ENCODE measurements at regions of chr4 and their contacts with region 1.

Region 1: DNA sequence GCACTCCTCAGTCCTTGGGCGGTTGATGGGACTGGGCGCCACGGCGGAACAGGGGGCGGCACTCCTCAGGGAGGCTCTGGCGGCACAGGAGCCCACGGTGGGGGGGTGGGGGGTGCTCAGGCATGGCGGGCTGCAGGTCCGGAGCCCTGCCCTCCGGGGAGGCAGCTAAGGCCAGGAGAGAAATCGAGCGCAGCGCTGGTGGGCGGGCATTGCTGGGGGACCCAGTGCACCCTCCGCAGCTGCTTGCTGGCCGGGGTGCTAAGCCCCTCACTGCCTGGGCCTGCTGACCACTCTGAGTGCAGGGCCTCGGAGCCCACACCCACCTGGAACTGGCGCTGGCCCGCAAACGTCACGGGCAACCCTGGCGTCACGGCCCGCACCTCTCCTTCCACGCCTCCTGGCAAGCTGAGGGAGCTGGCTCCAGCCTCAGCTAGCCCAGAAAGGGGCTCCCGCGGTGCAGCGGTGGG is 164.9 kb upstream of the AGA start:
- DNase-seq: no peak
- H3K4me3 ChIP-seq: no peak overlapping the region
- H3K27ac ChIP-seq: no peak overlapping the region
- H3K4me1 ChIP-seq: no peaks in the 10 kb centered on the region
- H3K27me3 ChIP-seq: no peaks in the 10 kb centered on the region
- CTCF ChIP-seq: no peak
- POLR2A ChIP-seq: no peak

Region 2: GRCh38 chr4:176902710-176903323 is 704.3 kb before region 1 on chr4:
- intact Hi-C with region 1: no loop called
- DNase-seq: no peak
- H3K4me3 ChIP-seq: no peak overlapping the region
- H3K27ac ChIP-seq: no peak overlapping the region
- H3K4me1 ChIP-seq: no peaks in the 10 kb centered on the region
- H3K27me3 ChIP-seq: no peaks in the 10 kb centered on the region
- CTCF ChIP-seq: no peak
- POLR2A ChIP-seq: no peak

Region 3: DNA sequence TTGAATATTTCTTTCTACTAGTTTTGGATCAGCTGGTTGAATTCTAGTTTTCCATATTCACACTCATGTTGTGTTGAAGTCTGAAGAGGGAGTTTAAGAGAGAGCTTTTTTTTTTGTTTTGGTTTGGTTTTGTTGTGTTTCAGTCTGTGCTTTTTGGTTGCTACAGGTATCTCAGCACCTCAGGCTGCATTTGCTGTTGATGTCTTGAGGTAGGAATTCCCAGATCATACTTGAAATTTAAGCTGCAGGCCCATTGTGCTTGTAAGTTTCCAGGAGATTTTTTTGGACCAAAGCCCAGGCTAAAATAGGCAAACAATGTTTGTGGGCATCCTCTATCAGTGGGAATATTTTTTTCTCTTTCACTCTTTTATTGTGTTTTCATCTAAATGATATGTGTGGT is 25.3 kb after region 1 on chr4:
- intact Hi-C with region 1: loop called (anchors 1 kb)
- DNase-seq: no peak
- H3K4me3 ChIP-seq: no peak overlapping the region
- H3K27ac ChIP-seq: no peak overlapping the region
- H3K4me1 ChIP-seq: no peaks in the 10 kb centered on the region
- H3K27me3 ChIP-seq: no peaks in the 10 kb centered on the region
- CTCF ChIP-seq: no peak
- POLR2A ChIP-seq: no peak

Measured in breast epithelium (tissue), 4 donors.